ENCODE measurements at regions of chr14 and their contacts with region 1.

Region 1: GRCh38 chr14:88189417-88190191 is 133.5 kb downstream of the KCNK10 start:
- DNase-seq: no peak
- ATAC-seq: peak; percentile 97

Region 2: GRCh38 chr14:88270776-88271175 is 81.2 kb after region 1 on chr14:
- intact Hi-C with region 1: no loop called
- DNase-seq: no peak
- ATAC-seq: peak; percentile 55

Region 3: GRCh38 chr14:88385345-88386101 is 195.9 kb after region 1 on chr14 and contains the start of gene SPATA7:
- intact Hi-C with region 1: loop called (anchors 10 kb)
- DNase-seq: peak; percentile 97
- ATAC-seq: peak; percentile 100
- total RNA-seq, gene SPATA7: 8.8 TPM